ENCODE measurements at regions of chr7 and their contacts with region 1.

Region 1: DNA sequence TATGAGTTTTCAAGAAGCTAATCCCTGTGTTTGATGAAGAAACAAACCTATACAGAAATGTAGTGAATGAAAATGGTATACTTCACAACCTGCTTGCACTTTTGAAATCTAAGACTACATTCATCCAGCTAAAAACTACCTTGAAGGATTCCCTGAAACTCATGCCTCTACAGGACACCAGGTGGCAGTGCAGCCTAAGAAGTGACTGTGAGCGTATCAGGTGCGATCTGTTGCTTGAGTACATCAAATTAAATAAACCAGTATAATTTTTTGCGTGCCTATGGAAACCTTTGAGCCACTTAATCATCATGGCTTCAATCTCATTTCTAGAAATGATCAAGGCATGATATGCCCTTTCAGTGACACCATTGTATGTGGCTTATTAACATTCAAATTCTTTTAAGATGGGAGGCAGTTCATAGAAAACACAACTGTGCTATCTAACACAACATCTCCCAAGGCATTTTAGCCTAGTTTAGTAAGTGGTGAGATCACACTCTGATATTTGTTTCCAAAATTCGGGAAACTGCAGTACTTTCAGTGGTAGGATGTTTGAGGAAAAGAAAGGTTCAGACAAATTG is 57.4 kb downstream of the PPP1R17 start:
- DNase-seq: no peak
- H3K4me3 ChIP-seq: no peak overlapping the region
- H3K27ac ChIP-seq: no peak overlapping the region
- H3K4me1 ChIP-seq: no peaks in the 10 kb centered on the region
- H3K27me3 ChIP-seq: no peaks in the 10 kb centered on the region
- CTCF ChIP-seq: peak; percentile 53 to 85 (median 83)

Region 2: GRCh38 chr7:31695859-31696614 is 48.3 kb before region 1 on chr7:
- intact Hi-C with region 1: no loop called
- DNase-seq: no peak
- H3K4me3 ChIP-seq: no peak overlapping the region
- H3K27ac ChIP-seq: no peak overlapping the region
- H3K4me1 ChIP-seq: no peaks in the 10 kb centered on the region
- H3K27me3 ChIP-seq: no peaks in the 10 kb centered on the region
- CTCF ChIP-seq: no peak

Region 3: DNA sequence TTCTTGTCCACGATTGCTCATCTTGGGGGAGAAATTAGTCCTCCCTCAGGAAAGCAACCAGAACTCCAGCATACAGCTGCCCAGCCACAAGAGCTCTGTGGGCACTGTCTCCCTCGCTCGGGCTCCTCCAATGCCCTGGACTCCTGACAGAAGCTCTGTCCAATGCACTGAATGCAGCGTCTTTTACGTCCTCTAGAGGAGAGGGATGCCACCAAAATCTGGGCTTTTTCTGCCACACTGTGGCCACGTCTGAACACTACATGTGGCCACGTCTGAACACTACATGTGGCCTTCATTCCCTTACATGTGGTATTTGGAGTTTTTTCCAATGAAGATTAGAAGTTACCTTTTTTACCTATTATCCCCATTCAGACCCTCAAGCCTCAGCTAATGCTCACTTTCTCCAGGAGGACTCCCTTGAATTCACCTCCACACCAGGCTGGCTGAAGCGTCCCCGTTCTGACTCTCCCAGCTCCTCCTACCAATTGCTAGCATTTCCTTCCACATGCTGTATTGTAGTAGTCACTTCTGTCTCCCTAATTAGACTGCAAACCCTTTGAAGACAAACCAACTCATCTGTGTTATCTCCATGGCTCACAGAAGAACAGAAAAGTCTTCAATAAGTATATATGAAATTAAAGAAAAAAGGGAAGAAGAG is 460.1 kb after region 1 on chr7:
- intact Hi-C with region 1: loop called (anchors 1 kb)
- DNase-seq: peak in 1 of 2 donors; percentile 70
- H3K4me3 ChIP-seq: peak overlapping the region; percentile 40 to 46
- H3K27ac ChIP-seq: no peak overlapping the region
- H3K4me1 ChIP-seq: no peaks in the 10 kb centered on the region
- H3K27me3 ChIP-seq: no peaks in the 10 kb centered on the region
- CTCF ChIP-seq: peak; percentile 55 to 82 (median 67)

Region 4: DNA sequence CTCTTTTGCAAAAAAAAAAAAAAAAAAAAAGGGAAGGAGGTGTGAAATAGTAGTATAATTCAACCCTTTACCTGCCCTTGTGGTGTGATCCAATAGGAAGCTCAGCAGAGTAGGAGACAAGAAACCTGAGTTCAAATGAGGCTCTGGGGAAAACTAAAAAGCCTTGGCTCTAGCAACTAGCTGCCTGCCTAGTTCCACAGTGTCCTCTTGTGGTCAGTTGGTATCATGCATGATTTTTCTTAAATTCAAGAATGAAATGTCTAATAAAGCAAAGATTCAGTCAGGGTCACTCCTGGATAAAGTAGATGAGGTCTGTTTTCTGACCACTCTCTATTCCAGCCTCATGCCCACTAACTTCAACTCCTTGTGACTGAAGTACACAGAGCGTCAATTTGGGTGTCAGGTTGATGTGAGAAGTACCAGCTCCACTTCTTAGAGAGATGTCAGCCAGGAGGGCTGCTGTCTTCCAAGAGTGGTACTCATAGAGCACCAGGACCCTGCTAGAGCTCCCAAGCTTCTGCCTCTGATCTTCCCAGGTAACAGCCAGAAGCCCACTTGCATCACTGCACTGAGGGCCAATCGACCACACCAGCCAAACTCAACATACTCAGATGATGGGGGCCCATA is 735.3 kb after region 1 on chr7:
- intact Hi-C with region 1: loop called (anchors 5 kb)
- DNase-seq: no peak
- H3K4me3 ChIP-seq: no peak overlapping the region
- H3K27ac ChIP-seq: no peak overlapping the region
- H3K4me1 ChIP-seq: no peaks in the 10 kb centered on the region
- H3K27me3 ChIP-seq: no peaks in the 10 kb centered on the region
- CTCF ChIP-seq: peak in 2 of 3 experiments; percentile 27 to 54

Measured in ascending aorta (tissue), 2 donors.